ENCODE measurements at regions of chr13 and their contacts with region 1.

Region 1: DNA sequence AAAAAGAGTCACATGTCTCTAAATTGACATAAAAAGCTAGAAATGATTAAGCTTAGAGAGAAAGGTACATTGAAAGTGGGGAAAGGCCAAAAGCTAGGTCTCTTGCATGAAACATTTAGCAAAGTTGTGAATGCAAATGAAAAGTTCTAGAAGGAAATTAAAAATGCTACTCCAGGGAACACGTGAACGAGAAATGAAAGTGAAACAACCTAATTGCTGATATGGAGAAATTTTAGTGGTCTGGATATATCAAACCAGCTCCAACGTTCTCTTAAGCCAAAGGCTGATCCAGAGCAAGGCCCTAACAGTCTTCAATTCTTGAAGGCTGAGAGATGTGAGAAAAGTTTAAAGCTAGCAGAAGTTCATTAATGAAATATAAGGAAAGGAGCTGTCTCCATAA is 419.8 kb downstream of the SLITRK6 start:
- DNase-seq: peak; percentile 32
- H3K4me3 ChIP-seq: peak overlapping the region; percentile 51
- H3K27ac ChIP-seq: no peak overlapping the region
- H3K4me1 ChIP-seq: peaks cover 60% of the 10 kb centered on the region
- CTCF ChIP-seq: no peak

Region 2: DNA sequence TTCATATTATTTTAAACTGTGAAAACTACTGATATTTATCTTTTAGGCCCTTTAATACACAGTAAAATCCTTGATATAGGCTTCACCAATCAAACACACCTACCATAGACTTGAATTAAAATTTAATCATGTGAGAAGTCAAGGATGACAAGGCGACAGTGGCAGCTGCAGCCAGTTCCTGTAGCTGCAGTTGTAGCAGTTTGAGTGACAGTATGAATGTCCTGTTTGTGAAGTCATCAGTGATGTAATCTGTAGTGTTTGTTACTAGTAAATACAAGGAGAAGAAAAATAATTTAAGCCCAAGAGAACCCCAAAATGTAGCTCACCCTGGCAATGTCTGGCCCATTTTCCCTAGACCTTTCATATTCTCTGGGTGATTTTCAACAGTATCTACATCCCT is 477.2 kb before region 1 on chr13:
- CTCF ChIA-PET with region 1: no interaction called
- POLR2A ChIA-PET with region 1: no interaction called
- intact Hi-C with region 1: loop called (anchors 10 kb)
- DNase-seq: peak; percentile 83
- H3K4me3 ChIP-seq: peak overlapping the region; percentile 40
- H3K27ac ChIP-seq: peak overlapping the region; percentile 37
- H3K4me1 ChIP-seq: peaks cover 22% of the 10 kb centered on the region
- CTCF ChIP-seq: no peak

Region 3: DNA sequence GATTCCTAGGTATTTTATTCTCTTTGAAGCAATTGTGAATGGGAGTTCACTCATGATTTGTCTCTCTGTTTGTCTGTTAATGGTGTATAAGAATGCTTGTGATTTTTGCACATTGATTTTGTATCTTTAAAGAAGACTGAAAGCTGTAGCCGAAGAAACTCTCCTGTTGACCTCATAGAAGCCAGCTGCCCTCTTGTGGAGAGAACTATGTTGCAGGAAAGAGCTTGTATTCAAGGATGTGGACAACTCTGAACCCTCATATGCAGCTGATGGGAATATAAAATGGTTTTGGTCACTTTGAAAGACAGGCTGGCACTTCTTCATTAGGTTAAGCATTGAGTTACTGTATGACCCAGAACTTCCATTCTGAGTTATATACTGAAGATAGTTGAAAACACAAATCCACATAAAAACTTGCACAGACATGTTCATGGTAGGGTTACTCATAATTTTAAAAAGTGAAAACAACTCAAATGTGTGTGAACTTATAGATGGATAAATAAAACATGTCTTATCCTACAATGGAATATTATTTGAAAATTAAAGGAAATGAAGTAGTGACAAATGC is 485.6 kb after region 1 on chr13:
- CTCF ChIA-PET with region 1: no interaction called
- POLR2A ChIA-PET with region 1: interaction called, 10 read pairs
- intact Hi-C with region 1: no loop called
- DNase-seq: peak; percentile 10
- H3K4me3 ChIP-seq: no peak overlapping the region
- H3K27ac ChIP-seq: no peak overlapping the region
- H3K4me1 ChIP-seq: no peaks in the 10 kb centered on the region
- CTCF ChIP-seq: peak; percentile 65

Region 4: GRCh38 chr13:85974604-85975366 is 595.4 kb after region 1 on chr13:
- CTCF ChIA-PET with region 1: no interaction called
- POLR2A ChIA-PET with region 1: no interaction called
- intact Hi-C with region 1: no loop called
- DNase-seq: no peak
- H3K4me3 ChIP-seq: no peak overlapping the region
- H3K27ac ChIP-seq: no peak overlapping the region
- H3K4me1 ChIP-seq: no peaks in the 10 kb centered on the region
- CTCF ChIP-seq: no peak

Measured in OCI-LY7 (cell line).